Endothelial cell of umbilical vein (primary cell): ENCODE measurements at regions of chr3 and their contacts with region 1.

Region 1: GRCh38 chr3:81352867-81353545 is 408.4 kb downstream of the GBE1 start:
- DNase-seq: peak; percentile 85
- H3K4me3 ChIP-seq: no peak overlapping the region
- H3K27ac ChIP-seq: no peak overlapping the region
- H3K4me1 ChIP-seq: no peaks in the 10 kb centered on the region
- H3K27me3 ChIP-seq: no peaks in the 10 kb centered on the region
- CTCF ChIP-seq: peak; percentile 16 to 38
- POLR2A ChIP-seq: no peak

Region 2: DNA sequence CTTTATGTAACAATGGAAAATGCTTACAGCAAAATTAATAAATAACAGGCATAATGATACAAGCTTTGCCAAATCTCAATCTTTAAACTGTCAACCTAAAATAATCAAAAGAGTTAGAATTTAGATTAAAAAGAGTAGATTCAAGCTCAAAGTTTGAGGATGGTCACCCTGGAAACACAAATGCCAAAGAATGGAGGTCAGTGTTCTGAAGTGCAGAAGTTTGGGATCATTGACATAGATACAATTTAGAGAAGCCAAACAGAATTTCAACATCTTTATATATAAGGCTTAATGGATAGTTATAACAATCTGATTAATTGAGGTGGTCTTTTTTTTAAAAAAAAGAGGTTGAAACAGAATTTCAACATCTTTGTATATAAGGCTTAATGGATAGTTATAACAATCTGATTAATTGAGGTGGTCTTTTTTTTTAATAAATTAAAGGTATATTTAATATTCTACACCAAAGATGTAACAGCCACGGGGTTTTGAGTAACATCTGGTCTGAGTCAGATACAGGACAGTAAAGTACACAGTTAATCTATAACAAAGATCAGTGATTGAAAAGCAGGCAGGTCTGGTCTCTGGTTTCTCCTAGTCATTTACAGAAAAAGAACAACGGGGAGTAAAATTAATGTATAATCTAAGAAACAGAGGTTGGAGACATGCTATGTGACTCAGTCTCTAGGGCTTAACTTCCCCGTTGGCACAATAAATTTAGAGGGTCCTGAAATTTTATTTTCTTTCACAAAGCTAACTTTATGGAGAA is 82.2 kb before region 1 on chr3:
- CTCF ChIA-PET with region 1: no interaction called
- POLR2A ChIA-PET with region 1: no interaction called
- dilution Hi-C with region 1: no loop called
- intact Hi-C with region 1: no loop called
- DNase-seq: no peak
- H3K4me3 ChIP-seq: no peak overlapping the region
- H3K27ac ChIP-seq: no peak overlapping the region
- H3K4me1 ChIP-seq: no peaks in the 10 kb centered on the region
- H3K27me3 ChIP-seq: no peaks in the 10 kb centered on the region
- CTCF ChIP-seq: no peak
- POLR2A ChIP-seq: no peak

Region 3: DNA sequence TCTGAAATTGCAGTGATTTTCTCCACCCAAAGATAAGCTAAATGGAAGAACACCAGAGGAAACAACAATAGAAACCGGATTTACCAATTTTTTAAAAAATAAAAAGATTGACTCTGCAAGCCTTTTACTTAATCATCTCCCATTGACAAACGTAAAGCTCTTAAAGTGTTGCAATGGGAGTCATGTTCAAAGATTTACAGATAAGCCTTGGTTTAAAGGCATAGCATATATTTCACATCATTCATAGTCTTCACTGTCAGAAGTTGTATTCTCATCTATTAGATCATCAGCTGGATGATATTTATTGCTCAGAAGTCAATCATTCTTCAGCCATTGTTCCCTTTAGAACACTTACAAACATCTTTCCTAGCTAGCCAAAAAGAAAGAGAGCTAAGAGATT is 10.8 kb after region 1 on chr3:
- CTCF ChIA-PET with region 1: interaction called, 25 read pairs
- POLR2A ChIA-PET with region 1: no interaction called
- dilution Hi-C with region 1: no loop called
- intact Hi-C with region 1: no loop called
- DNase-seq: no peak
- H3K4me3 ChIP-seq: peak overlapping the region in 1 of 3 experiments; percentile 48
- H3K27ac ChIP-seq: peak overlapping the region; percentile 57
- H3K4me1 ChIP-seq: peaks cover 17% of the 10 kb centered on the region
- H3K27me3 ChIP-seq: no peaks in the 10 kb centered on the region
- CTCF ChIP-seq: no peak
- POLR2A ChIP-seq: no peak

Region 4: DNA sequence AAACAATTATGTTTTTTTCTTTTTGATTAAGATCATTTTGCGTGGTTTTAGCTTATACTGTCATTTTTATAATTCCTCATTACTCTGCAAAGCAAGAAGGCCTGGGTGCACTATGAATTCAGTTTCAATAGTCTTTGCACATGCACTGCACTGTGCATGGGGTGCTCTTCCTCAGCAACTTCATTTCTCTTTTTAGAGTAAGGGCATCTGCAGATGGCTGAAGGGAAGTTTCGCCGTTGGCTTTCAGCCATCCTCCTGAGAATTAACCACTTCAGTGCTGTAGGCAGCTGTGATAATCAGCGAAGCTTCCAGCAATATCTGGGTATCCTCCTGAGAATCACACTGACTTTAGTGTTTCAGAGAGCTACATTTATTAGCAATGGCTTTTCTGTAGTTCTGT is 123.7 kb after region 1 on chr3:
- CTCF ChIA-PET with region 1: interaction called, 3 read pairs
- POLR2A ChIA-PET with region 1: no interaction called
- dilution Hi-C with region 1: no loop called
- intact Hi-C with region 1: loop called (anchors 5 kb)
- DNase-seq: no peak
- H3K4me3 ChIP-seq: no peak overlapping the region
- H3K27ac ChIP-seq: no peak overlapping the region
- H3K4me1 ChIP-seq: peaks cover 26% of the 10 kb centered on the region
- H3K27me3 ChIP-seq: no peaks in the 10 kb centered on the region
- CTCF ChIP-seq: no peak
- POLR2A ChIP-seq: no peak

Region 5: GRCh38 chr3:81490541-81491288 is 137.7 kb after region 1 on chr3:
- CTCF ChIA-PET with region 1: interaction called, 21 read pairs
- POLR2A ChIA-PET with region 1: no interaction called
- dilution Hi-C with region 1: no loop called
- intact Hi-C with region 1: loop called (anchors 5 kb)
- DNase-seq: peak; percentile 80
- H3K4me3 ChIP-seq: no peak overlapping the region
- H3K27ac ChIP-seq: no peak overlapping the region
- H3K4me1 ChIP-seq: peaks cover 5% of the 10 kb centered on the region
- H3K27me3 ChIP-seq: no peaks in the 10 kb centered on the region
- CTCF ChIP-seq: peak; percentile 75 to 80
- POLR2A ChIP-seq: no peak

Region 6: GRCh38 chr3:81643721-81644120 is 290.7 kb after region 1 on chr3:
- CTCF ChIA-PET with region 1: interaction called, 18 read pairs
- POLR2A ChIA-PET with region 1: no interaction called
- dilution Hi-C with region 1: no loop called
- intact Hi-C with region 1: loop called (anchors 1 kb)
- DNase-seq: peak; percentile 41
- H3K4me3 ChIP-seq: no peak overlapping the region
- H3K27ac ChIP-seq: no peak overlapping the region
- H3K4me1 ChIP-seq: no peaks in the 10 kb centered on the region
- H3K27me3 ChIP-seq: no peaks in the 10 kb centered on the region
- CTCF ChIP-seq: peak; percentile 28 to 42
- POLR2A ChIP-seq: no peak